ENCODE measurements at regions of chr17 and their contacts with region 1.

Region 1: DNA sequence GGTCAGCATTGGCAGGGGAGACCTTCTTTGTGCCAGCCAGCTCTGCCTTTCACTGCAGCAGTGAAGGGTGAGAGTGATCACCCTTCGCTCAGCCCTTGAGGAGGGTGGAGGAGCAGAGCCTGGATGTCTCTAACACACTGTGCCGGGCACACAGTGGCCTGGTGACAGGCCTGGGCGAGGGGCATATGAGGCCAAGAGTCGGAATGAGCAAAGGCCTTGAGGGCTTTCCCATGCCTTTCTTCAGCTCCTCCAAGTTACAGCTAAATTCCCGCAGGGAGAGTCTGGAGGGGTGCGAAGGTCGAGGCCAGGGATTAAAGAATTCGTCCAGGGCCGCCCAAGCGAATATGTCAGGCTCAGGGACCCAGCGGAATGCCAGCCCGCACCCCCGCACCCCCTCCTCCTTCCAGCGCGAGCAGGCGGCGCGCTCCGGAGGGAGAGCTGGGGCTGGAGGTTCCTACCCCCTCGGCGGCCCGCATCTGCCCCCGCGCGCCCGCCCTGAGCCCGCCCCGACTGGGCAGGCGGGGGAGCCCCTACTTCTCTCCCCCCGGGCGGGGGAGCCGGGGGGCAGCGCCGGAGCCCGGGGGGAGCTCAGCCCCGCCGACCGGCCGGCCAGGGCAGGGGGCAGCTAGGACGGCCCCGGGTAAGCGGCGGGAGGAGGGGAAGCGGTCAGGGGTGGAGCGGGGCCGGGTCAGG is at the start of gene RASL10B:
- DNase-seq: no peak
- H3K4me3 ChIP-seq: peak within 1 kb of the TSS in 2 of 3 experiments; percentile 26 to 42
- H3K27ac ChIP-seq: no peak within 1 kb of the TSS
- H3K4me1 ChIP-seq: no peaks in the 10 kb centered on the region
- H3K27me3 ChIP-seq: no peaks in the 10 kb centered on the region
- CTCF ChIP-seq: no peak
- total RNA-seq, gene RASL10B: 0.19 to 0.67 TPM

Region 2: GRCh38 chr17:35695613-35696012 is 35.8 kb before region 1 on chr17:
- CTCF ChIA-PET with region 1: no interaction called
- dilution Hi-C with region 1: loop called (anchors 5 kb)
- in situ Hi-C with region 1: no loop called
- intact Hi-C with region 1: no loop called
- DNase-seq: no peak
- H3K4me3 ChIP-seq: no peak overlapping the region
- H3K27ac ChIP-seq: no peak overlapping the region
- H3K4me1 ChIP-seq: no peaks in the 10 kb centered on the region
- H3K27me3 ChIP-seq: no peaks in the 10 kb centered on the region
- CTCF ChIP-seq: no peak

Measured in mammary epithelial cell (primary cell).